Transverse colon (tissue), 4 donors: ENCODE measurements at regions of chr16 and their contacts with region 1.

Region 1: DNA sequence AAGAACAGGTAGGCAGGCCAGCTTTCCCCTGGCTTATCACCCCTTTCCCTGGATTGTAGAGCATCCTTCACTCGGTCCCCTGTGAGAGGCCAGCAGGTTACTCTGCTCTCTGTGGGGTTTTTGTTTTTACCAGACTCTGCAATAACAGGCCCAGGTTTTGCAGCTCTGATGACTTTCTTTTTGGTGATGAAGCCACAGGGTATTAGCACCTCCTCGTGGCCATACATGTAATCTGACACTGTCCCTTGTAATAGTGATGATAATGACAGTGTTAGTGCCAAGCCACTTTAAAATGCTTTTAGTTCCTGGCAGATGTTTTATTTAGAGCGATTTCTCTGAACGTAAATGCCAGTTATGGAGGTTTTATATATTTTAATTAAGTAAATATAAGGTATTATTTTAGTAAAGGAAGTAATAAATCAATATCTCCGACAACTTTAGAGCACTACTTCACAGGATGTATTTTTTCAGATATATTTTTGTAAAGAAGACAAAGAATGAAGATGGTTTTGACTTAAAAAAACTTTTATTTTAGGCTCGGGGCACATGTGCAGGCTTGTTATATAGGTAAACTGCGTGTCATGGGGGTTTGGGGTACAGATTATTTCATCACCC is 38.0 kb upstream of the CPHXL start:
- DNase-seq: peak; percentile 61
- H3K4me3 ChIP-seq: no peak overlapping the region
- H3K27ac ChIP-seq: no peak overlapping the region
- H3K4me1 ChIP-seq: peaks cover 0 to 3% (median 0%) of the 10 kb centered on the region in 4 donors
- H3K27me3 ChIP-seq: peaks cover 9% of the 10 kb centered on the region
- CTCF ChIP-seq: peak; percentile 71 to 80 (median 77)
- EP300 ChIP-seq: no peak
- POLR2A ChIP-seq: no peak

Region 2: GRCh38 chr16:75198135-75198600 is 566.1 kb before region 1 on chr16:
- in situ Hi-C with region 1: loop called in 3 of 4 experiments (anchors 25 kb)
- intact Hi-C with region 1: no loop called
- DNase-seq: no peak
- H3K4me3 ChIP-seq: no peak overlapping the region
- H3K27ac ChIP-seq: no peak overlapping the region
- H3K4me1 ChIP-seq: peaks cover 0 to 13% (median 3%) of the 10 kb centered on the region in 4 donors
- H3K27me3 ChIP-seq: peaks cover 26% of the 10 kb centered on the region
- CTCF ChIP-seq: no peak
- EP300 ChIP-seq: no peak
- POLR2A ChIP-seq: no peak

Region 3: DNA sequence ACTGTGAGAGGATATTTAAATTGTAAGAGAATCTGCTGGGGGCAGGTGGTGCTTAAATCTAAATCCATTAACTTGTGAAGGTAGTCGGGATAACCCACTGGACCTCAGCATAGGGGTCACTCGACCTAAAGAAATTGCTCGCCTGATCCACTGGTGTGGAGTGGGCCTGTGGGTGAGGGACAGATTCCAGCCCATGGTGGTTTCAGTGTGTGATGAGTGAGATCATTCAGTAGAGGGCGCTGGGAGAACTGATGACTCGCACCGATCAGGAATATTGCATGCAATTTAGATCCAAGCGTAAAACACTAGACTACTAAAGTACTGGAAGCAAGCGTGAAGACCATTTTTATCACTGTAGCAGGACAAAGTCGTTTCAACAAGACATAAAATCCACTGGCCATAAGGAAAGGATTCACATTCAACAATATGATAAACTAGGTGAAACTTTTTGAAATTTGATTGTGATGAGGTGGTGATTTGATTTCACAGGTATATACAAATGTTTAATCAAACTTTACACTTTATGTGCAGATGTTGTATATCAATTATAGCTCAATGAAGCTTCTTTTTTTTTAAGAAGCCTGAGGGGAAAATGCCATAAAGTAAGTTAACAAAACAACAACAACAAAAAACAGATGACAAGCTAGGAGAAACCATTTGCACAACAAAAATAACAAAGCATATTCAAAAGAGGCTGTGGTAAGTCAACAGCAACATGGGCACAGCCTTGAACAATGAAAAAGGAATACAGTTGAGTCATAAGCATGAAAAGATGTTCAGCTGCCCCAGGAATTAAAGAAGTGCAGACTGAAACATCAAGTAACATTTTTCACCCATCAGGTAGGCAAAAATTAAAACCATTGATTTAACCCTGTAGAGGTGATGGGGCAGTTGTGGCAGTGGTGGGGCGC is 292.3 kb before region 1 on chr16:
- in situ Hi-C with region 1: loop called (anchors 10 to 25 kb)
- intact Hi-C with region 1: loop called (anchors 5 kb)
- DNase-seq: peak; percentile 61
- H3K4me3 ChIP-seq: no peak overlapping the region
- H3K27ac ChIP-seq: no peak overlapping the region
- H3K4me1 ChIP-seq: peaks cover 0 to 4% (median 0%) of the 10 kb centered on the region in 4 donors
- H3K27me3 ChIP-seq: no peaks in the 10 kb centered on the region
- CTCF ChIP-seq: peak; percentile 68 to 83 (median 71)
- EP300 ChIP-seq: no peak
- POLR2A ChIP-seq: no peak

Region 4: GRCh38 chr16:75495076-75495674 is 269.1 kb before region 1 on chr16 and contains the start of gene CHST6:
- in situ Hi-C with region 1: loop called in 3 of 4 experiments (anchors 25 kb)
- intact Hi-C with region 1: no loop called
- DNase-seq: peak; percentile 31
- H3K4me3 ChIP-seq: peak within 1 kb of the TSS; percentile 2 to 44 (median 30)
- H3K27ac ChIP-seq: no peak within 1 kb of the TSS
- H3K4me1 ChIP-seq: peaks cover 4 to 14% (median 12%) of the 10 kb centered on the region in 4 donors
- H3K27me3 ChIP-seq: peaks cover 25% of the 10 kb centered on the region
- CTCF ChIP-seq: no peak
- EP300 ChIP-seq: no peak
- POLR2A ChIP-seq: no peak
- total RNA-seq, gene CHST6: 1.7 to 3.7 (median 2.9) TPM

Region 5: DNA sequence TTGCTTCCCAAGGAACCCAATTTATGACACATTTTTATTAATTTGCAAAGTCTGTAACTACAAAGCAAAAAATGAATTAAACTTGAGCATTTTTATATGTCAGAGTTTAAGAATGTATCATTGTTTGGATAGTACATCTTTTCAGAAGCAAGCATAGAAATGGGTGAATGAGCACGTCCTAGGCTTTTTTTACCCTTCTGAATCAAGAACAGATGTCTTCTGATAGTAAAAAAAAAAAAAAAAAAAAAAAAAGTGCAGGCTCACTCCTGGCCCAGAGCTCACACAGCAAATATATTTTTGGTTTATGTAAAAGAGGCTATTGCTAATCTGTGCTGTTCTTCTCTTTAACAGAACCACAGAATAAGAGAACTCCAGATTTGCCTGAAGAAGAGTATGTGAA is 110.3 kb before region 1 on chr16:
- in situ Hi-C with region 1: loop called in 2 of 4 experiments (anchors 5 to 25 kb)
- intact Hi-C with region 1: no loop called
- DNase-seq: no peak
- H3K4me3 ChIP-seq: no peak overlapping the region
- H3K27ac ChIP-seq: no peak overlapping the region
- H3K4me1 ChIP-seq: peaks cover 16 to 43% (median 24%) of the 10 kb centered on the region in 4 donors
- H3K27me3 ChIP-seq: no peaks in the 10 kb centered on the region
- CTCF ChIP-seq: no peak
- EP300 ChIP-seq: no peak
- POLR2A ChIP-seq: no peak